CD4-positive, alpha-beta T cell (primary cell): ENCODE measurements at regions of chr15 and their contacts with region 1.

Region 1: DNA sequence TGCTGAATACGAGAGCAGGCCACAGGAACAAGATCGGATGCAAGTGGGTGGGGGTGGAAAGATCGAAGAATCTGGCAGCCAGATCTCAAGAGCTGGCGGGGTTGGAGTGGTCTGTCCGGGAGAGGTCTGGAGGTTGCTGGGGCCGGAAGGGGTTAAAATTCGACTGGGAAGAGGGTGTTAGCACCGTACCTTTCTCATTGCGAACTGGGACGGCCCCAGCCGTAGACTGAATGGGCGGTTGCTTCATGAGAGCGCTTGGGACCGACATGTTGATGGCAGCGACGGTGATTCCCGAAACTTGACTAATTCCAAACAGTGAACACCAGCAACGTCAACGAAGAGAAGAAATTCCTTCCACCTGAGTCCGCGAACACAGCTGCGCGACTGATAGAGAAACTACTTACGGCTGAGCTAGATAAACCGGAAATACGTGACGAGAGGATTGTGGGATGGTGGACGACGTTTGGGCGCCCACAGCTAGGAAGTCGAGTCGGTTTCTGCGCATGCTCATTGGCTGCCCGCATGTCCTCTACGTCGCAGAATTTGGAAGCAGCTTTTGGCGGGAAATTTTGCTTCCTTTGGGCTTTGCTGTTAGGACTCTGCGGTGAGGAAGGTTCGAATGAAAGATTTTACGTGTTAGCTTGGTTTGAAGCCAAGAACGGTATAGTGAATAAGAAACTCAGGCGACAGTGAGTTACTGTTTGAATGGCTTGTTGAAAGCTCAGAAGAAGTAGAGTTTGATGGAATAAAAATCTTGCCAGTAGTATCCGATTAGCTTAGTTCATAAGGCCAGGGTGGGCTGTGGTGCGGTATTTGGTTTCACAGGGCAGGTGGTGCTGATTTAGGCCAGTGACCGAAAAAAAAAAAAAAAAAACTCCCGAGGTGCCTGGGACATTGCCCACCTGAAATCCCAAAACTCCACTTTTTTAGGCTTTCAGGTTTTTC is at the start of gene MFAP1:
- DNase-seq: peak; percentile 79 to 99 (median 88)
- ATAC-seq: peak; percentile 93
- H3K4me3 ChIP-seq: peak within 1 kb of the TSS; percentile 86
- H3K4me3 Mint-ChIP-seq: peak within 1 kb of the TSS; percentile 99
- H3K27ac ChIP-seq: peak within 1 kb of the TSS; percentile 90 to 94
- H3K27ac Mint-ChIP-seq: peak within 1 kb of the TSS; percentile 97
- H3K4me1 ChIP-seq: peaks cover 65% of the 10 kb centered on the region
- H3K4me1 Mint-ChIP-seq: peaks cover 62% of the 10 kb centered on the region
- H3K27me3 ChIP-seq: no peaks in the 10 kb centered on the region
- H3K27me3 Mint-ChIP-seq: no peaks in the 10 kb centered on the region
- CTCF ChIP-seq: no peak
- total RNA-seq, gene MFAP1: 9.4 to 10.6 TPM

Region 2: DNA sequence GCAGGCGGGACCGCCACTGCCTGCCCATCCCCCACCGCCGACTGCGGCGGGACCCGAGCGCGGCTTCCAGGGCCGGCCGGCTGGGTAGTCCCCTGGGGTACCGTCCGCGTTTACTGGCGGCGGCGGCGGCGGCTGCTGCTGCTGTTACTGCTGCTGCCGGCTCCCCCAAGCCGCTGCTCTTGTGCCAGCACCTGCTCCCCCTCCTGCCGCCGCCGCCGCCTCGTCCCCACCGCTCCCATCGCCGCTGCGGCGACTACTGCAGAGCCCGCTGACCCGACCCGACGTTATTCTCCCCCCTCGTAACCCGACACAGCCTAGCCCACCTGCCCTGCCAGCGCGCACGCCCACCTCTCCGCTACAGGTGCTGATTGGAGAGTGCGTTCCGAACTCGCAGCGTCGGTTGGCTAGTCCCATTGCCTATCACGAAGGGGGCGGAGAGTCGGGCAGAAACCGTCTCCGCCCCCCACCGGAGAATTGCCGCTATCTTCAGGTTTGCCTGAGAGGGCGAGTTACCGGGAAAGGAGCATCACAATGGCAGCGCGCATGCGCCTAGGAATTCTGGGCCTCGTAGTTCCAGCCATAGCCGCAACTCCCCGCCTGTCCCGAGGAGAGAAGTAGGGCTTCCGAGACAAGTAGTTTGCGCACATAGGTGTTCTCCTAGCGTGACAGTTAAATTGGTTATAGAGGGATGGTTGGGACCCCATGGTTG is 903.9 kb before region 1 on chr15 and contains the start of gene TTBK2:
- CTCF ChIA-PET with region 1: no interaction called
- POLR2A ChIA-PET with region 1: no interaction called
- intact Hi-C with region 1: loop called in 1 of 2 experiments (anchors 10 kb)
- DNase-seq: peak; percentile 94 to 99 (median 98)
- ATAC-seq: peak; percentile 96
- H3K4me3 ChIP-seq: peak within 1 kb of the TSS; percentile 75
- H3K4me3 Mint-ChIP-seq: peak within 1 kb of the TSS; percentile 99
- H3K27ac ChIP-seq: peak within 1 kb of the TSS; percentile 59 to 63
- H3K27ac Mint-ChIP-seq: peak within 1 kb of the TSS; percentile 89
- H3K4me1 ChIP-seq: peaks cover 15% of the 10 kb centered on the region
- H3K4me1 Mint-ChIP-seq: peaks cover 35% of the 10 kb centered on the region
- H3K27me3 ChIP-seq: no peaks in the 10 kb centered on the region
- H3K27me3 Mint-ChIP-seq: no peaks in the 10 kb centered on the region
- CTCF ChIP-seq: peak; percentile 26
- total RNA-seq, gene TTBK2: 17.5 to 20.1 TPM

Region 3: DNA sequence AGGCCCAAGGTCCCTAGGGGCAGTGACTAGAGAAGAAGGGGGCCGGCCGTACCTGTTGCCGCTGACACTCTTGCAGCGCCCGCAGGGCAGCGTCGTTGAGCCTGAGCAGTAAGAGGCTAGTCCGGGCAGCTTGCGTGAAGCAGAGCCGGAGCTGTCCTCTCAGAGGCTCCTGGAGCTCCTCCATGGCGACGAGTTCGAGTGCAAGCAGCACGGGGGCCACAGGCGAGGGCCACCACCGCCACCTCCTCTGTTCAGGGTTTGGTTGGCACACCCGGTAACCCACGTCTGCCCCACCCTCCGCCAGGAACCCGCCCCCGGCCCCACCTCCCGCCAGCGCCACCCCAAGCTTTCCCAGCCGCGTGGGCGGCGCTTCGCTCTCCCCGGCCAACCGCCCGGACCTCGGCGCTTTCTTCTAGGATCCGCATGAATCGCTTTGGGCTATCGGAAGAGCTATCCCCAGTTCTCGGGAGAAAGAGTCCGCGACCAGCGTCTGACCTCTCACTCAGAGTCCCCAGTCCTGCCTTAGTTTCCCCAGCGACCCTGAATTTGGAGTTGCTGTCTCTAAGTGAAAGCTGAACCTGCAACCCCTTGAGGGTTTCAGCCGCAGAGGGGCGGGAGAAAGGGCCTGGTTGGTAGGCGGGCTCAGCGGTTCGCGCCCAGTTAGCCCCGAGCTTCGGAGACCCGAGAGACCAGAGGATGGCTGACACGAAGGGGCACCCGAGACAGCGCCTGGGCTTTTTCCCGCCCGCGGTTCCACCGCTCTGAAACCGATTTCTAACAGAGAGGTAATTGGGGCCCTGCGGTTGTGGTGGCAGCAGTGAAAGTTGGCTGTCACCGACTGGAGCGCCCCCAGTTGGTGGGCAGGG is 47.6 kb before region 1 on chr15 and contains the start of gene ELL3:
- CTCF ChIA-PET with region 1: interaction called, 5 read pairs
- POLR2A ChIA-PET with region 1: interaction called, 33 read pairs
- intact Hi-C with region 1: loop called in 1 of 2 experiments (anchors 2 kb)
- DNase-seq: peak; percentile 67 to 94 (median 79)
- ATAC-seq: peak; percentile 79
- H3K4me3 ChIP-seq: peak within 1 kb of the TSS; percentile 79
- H3K4me3 Mint-ChIP-seq: peak within 1 kb of the TSS; percentile 94
- H3K27ac ChIP-seq: peak within 1 kb of the TSS; percentile 63 to 82
- H3K27ac Mint-ChIP-seq: peak within 1 kb of the TSS; percentile 94
- H3K4me1 ChIP-seq: peaks cover 25% of the 10 kb centered on the region
- H3K4me1 Mint-ChIP-seq: peaks cover 22% of the 10 kb centered on the region
- H3K27me3 ChIP-seq: no peaks in the 10 kb centered on the region
- H3K27me3 Mint-ChIP-seq: no peaks in the 10 kb centered on the region
- CTCF ChIP-seq: peak; percentile 77
- total RNA-seq, gene ELL3: 1.1 to 2.3 TPM

Region 4: GRCh38 chr15:43791993-43792760 is 32.4 kb before region 1 on chr15 and contains the start of gene SERF2:
- CTCF ChIA-PET with region 1: no interaction called
- POLR2A ChIA-PET with region 1: interaction called, 18 read pairs
- intact Hi-C with region 1: loop called (anchors 5 kb)
- DNase-seq: peak; percentile 98 to 100 (median 99)
- ATAC-seq: peak; percentile 94
- H3K4me3 ChIP-seq: peak within 1 kb of the TSS; percentile 100
- H3K4me3 Mint-ChIP-seq: peak within 1 kb of the TSS; percentile 99
- H3K27ac ChIP-seq: peak within 1 kb of the TSS; percentile 98 to 99
- H3K27ac Mint-ChIP-seq: peak within 1 kb of the TSS; percentile 99
- H3K4me1 ChIP-seq: peaks cover 38% of the 10 kb centered on the region
- H3K4me1 Mint-ChIP-seq: peaks cover 58% of the 10 kb centered on the region
- H3K27me3 ChIP-seq: peaks cover 0 to 3% of the 10 kb centered on the region in 2 experiments
- H3K27me3 Mint-ChIP-seq: no peaks in the 10 kb centered on the region
- CTCF ChIP-seq: no peak
- total RNA-seq, gene SERF2: 319 to 323 TPM

Region 5: GRCh38 chr15:43800286-43801141 is 24.1 kb before region 1 on chr15 and contains the start of gene HYPK:
- CTCF ChIA-PET with region 1: interaction called, 3 read pairs
- POLR2A ChIA-PET with region 1: interaction called, 74 read pairs
- intact Hi-C with region 1: loop called (anchors 2 kb)
- DNase-seq: peak; percentile 85 to 96 (median 92)
- ATAC-seq: peak; percentile 98
- H3K4me3 ChIP-seq: peak within 1 kb of the TSS; percentile 82
- H3K4me3 Mint-ChIP-seq: peak within 1 kb of the TSS; percentile 94
- H3K27ac ChIP-seq: peak within 1 kb of the TSS; percentile 79 to 92
- H3K27ac Mint-ChIP-seq: peak within 1 kb of the TSS; percentile 90
- H3K4me1 ChIP-seq: peaks cover 28% of the 10 kb centered on the region
- H3K4me1 Mint-ChIP-seq: peaks cover 59% of the 10 kb centered on the region
- H3K27me3 ChIP-seq: no peaks in the 10 kb centered on the region
- H3K27me3 Mint-ChIP-seq: no peaks in the 10 kb centered on the region
- CTCF ChIP-seq: no peak
- total RNA-seq, gene HYPK: 17.6 to 18.5 TPM

Region 6: DNA sequence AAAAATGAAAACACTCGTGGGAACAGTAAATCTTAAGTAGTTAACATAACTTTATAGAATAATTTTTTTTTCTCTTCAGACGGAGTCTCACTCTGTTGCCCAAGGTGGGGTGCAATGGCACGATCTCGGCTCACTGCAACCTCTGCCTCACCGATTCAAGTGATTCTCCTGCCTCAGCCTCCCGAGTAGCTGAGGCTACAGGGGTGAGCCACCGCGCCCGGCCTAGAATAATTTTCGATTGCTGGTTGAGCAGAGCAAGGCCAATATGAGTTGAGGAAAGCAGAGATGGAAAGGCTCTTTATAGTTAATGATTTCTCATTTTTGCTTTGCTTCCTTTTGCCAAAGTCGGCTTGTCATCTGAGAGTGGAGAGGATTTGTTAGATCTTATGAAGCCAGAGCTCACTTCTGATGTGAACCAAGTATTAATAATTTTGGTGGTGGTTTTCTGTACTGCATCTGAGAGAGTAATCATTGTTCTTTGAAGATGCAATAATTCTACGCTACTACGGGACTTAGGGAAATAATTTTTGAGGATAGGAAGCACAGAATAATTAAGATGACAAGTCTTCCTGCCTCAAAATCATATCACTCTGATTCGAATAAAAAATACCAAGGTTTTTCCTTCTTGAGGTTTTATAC is 462.4 kb after region 1 on chr15:
- CTCF ChIA-PET with region 1: no interaction called
- POLR2A ChIA-PET with region 1: interaction called, 8 read pairs
- intact Hi-C with region 1: loop called in 1 of 2 experiments (anchors 5 kb)
- DNase-seq: peak in 2 of 14 experiments; percentile 23 to 32
- ATAC-seq: no peak
- H3K4me3 ChIP-seq: peak overlapping the region; percentile 78
- H3K4me3 Mint-ChIP-seq: peak overlapping the region; percentile 98
- H3K27ac ChIP-seq: peak overlapping the region; percentile 95
- H3K27ac Mint-ChIP-seq: peak overlapping the region; percentile 99
- H3K4me1 ChIP-seq: peaks cover 16% of the 10 kb centered on the region
- H3K4me1 Mint-ChIP-seq: peaks cover 51% of the 10 kb centered on the region
- H3K27me3 ChIP-seq: no peaks in the 10 kb centered on the region
- H3K27me3 Mint-ChIP-seq: peaks cover 8% of the 10 kb centered on the region
- CTCF ChIP-seq: peak; percentile 27